ENCODE measurements at regions of chr19 and their contacts with region 1.

Region 1: DNA sequence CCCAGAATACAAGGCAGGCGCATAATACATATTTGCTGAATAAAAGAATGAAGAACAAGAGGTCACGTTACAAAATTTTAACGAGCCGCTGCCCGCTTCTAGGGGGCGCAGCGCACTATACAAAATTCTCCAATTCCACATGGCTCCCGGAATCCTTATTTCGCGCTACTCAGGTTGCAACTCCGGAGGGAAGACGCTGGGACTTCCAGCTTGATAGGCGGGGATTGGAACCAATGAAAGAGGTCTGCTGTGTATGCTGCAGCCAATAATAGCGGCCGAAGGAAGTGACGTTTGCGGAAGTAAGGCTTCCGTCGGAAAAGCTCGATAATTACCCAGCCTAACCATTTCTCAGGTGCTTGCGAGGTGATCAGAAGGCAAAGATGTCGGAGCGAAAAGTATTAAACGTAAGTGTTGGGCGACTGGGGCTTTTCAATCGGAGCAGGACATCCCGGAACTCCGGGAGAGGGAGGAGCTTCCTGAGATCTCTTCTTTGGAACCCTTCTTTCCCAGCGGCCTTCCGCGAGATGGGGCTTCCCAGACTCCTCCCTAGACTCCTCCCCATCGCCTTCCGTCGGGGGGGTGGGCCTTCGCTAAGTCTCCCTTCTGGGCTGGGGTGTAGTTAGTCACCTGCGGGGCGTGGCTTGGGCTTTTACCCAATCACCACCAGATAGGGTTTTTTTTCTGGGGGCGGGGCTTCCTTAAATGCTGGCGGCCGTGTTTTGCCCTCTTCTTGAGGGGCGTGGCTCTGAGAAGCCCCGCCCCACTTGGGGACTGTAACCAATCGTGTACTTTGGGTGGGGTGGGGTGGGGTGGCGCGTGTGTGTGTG is at the start of gene YJU2:
- DNase-seq: peak; percentile 99
- ATAC-seq: peak; percentile 95
- H3K4me3 ChIP-seq: peak within 1 kb of the TSS; percentile 72 to 89 (median 84)
- H3K27ac ChIP-seq: peak within 1 kb of the TSS; percentile 96
- H3K4me1 ChIP-seq: peaks cover 15% of the 10 kb centered on the region
- H3K27me3 ChIP-seq: no peaks in the 10 kb centered on the region; a peak in 2 of 5 replicates
- CTCF ChIP-seq: peak; percentile 66
- EP300 ChIP-seq: peak in 1 of 2 experiments; percentile 36; a peak in 1 of 4 replicates
- POLR2A ChIP-seq: peak; percentile 35 to 93; a peak in 3 of 4 replicates
- RAD21 ChIP-seq: 0 out of 2 replicates have a peak, but pooled peaks have one; percentile 38
- total RNA-seq, gene YJU2: 17.9 and 18.4 TPM in 2 replicates

Region 2: GRCh38 chr19:4232958-4233853 is 13.8 kb before region 1 on chr19:
- CTCF ChIA-PET with region 1: no interaction called
- POLR2A ChIA-PET with region 1: interaction called, 14 read pairs
- in situ Hi-C with region 1: no loop called
- intact Hi-C with region 1: no loop called
- DNase-seq: peak; percentile 45
- ATAC-seq: peak; percentile 68
- H3K4me3 ChIP-seq: peak overlapping the region in 2 of 3 experiments; percentile 44 to 65; a peak in 4 of 6 replicates
- H3K27ac ChIP-seq: peak overlapping the region; percentile 64
- H3K4me1 ChIP-seq: peaks cover 48% of the 10 kb centered on the region
- H3K27me3 ChIP-seq: peaks cover 0 to 2% of the 10 kb centered on the region in 2 experiments; a peak in 1 of 5 replicates
- CTCF ChIP-seq: peak; percentile 93
- EP300 ChIP-seq: no peak
- POLR2A ChIP-seq: no peak
- RAD21 ChIP-seq: peak; percentile 50; the same call in 1 of the 2 replicates

Region 3: GRCh38 chr19:4278419-4279266 is 31.7 kb after region 1 on chr19 and contains the start of gene SHD:
- CTCF ChIA-PET with region 1: no interaction called
- POLR2A ChIA-PET with region 1: no interaction called
- in situ Hi-C with region 1: no loop called
- intact Hi-C with region 1: no loop called
- DNase-seq: no peak
- ATAC-seq: peak; percentile 45
- H3K4me3 ChIP-seq: peak within 1 kb of the TSS; percentile 12 to 48 (median 27); a peak in 4 of 6 replicates
- H3K27ac ChIP-seq: no peak within 1 kb of the TSS
- H3K4me1 ChIP-seq: 0 out of 2 replicates have a peak, but pooled peaks cover 7% of the 10 kb centered on the region
- H3K27me3 ChIP-seq: peaks cover 0 to 46% of the 10 kb centered on the region in 2 experiments
- CTCF ChIP-seq: no peak
- EP300 ChIP-seq: no peak
- POLR2A ChIP-seq: no peak
- RAD21 ChIP-seq: no peak
- total RNA-seq, gene SHD: 0.11 TPM in 1 of 2 replicates, not detected in the other

Measured in HepG2 (cell line).